Activated CD4-positive, alpha-beta memory T cell treated with anti-CD3 and anti-CD28 coated beads, Interleukin-2, amount 10 ng/mL, durations not matched to agents 7 days and 5 days (primary cell): ENCODE measurements at regions of chr1 and their contacts with region 1.

Region 1: GRCh38 chr1:152459596-152460528 is 45.8 kb upstream of the CRNN start:
- DNase-seq: peak; percentile 77
- H3K4me3 Mint-ChIP-seq: peak overlapping the region; percentile 50
- H3K27ac Mint-ChIP-seq: peak overlapping the region; percentile 68
- H3K4me1 Mint-ChIP-seq: peaks cover 28% of the 10 kb centered on the region
- H3K27me3 Mint-ChIP-seq: peaks cover 14% of the 10 kb centered on the region

Region 2: GRCh38 chr1:152189657-152190442 is 270.0 kb before region 1 on chr1:
- CTCF ChIA-PET with region 1: interaction called, 109 read pairs
- POLR2A ChIA-PET with region 1: interaction called, 7 read pairs
- DNase-seq: peak; percentile 71
- H3K4me3 Mint-ChIP-seq: peak overlapping the region; percentile 68
- H3K27ac Mint-ChIP-seq: no peak overlapping the region
- H3K4me1 Mint-ChIP-seq: peaks cover 9% of the 10 kb centered on the region
- H3K27me3 Mint-ChIP-seq: peaks cover 39% of the 10 kb centered on the region

Region 3: GRCh38 chr1:152398812-152399698 is 60.8 kb before region 1 on chr1:
- CTCF ChIA-PET with region 1: interaction called, 29 read pairs
- POLR2A ChIA-PET with region 1: interaction called, 3 read pairs
- DNase-seq: no peak
- H3K4me3 Mint-ChIP-seq: no peak overlapping the region
- H3K27ac Mint-ChIP-seq: no peak overlapping the region
- H3K4me1 Mint-ChIP-seq: no peaks in the 10 kb centered on the region
- H3K27me3 Mint-ChIP-seq: peaks cover 2% of the 10 kb centered on the region

Region 4: GRCh38 chr1:152473887-152474537 is 14.2 kb after region 1 on chr1:
- CTCF ChIA-PET with region 1: interaction called, 21 read pairs
- POLR2A ChIA-PET with region 1: no interaction called
- DNase-seq: no peak
- H3K4me3 Mint-ChIP-seq: no peak overlapping the region
- H3K27ac Mint-ChIP-seq: no peak overlapping the region
- H3K4me1 Mint-ChIP-seq: no peaks in the 10 kb centered on the region
- H3K27me3 Mint-ChIP-seq: no peaks in the 10 kb centered on the region